K562 (cell line): ENCODE measurements at regions of chr11 and their contacts with region 1.

Region 1: GRCh38 chr11:131511794-131512193 is 141.4 kb downstream of the NTM start:
- DNase-seq: peak; percentile 30 to 42 (median 34)
- ATAC-seq: peak; percentile 90
- H3K4me3 ChIP-seq: no peak overlapping the region
- H3K27ac ChIP-seq: no peak overlapping the region
- H3K4me1 ChIP-seq: no peaks in the 10 kb centered on the region
- H3K27me3 ChIP-seq: peaks cover 0 to 8% of the 10 kb centered on the region in 2 experiments; a peak in 1 of 5 replicates
- CTCF ChIP-seq: peak; percentile 51 to 59 (median 59)
- EP300 ChIP-seq: no peak
- POLR2A ChIP-seq: no peak
- RAD21 ChIP-seq: peak; percentile 26 to 54; a peak in 3 of 4 replicates

Region 2: GRCh38 chr11:131064373-131064991 is 447.3 kb before region 1 on chr11:
- CTCF ChIA-PET with region 1: interaction called, 4 read pairs
- POLR2A ChIA-PET with region 1: no interaction called
- in situ Hi-C with region 1: loop called (anchors 5 kb)
- intact Hi-C with region 1: loop called (anchors 1 kb)
- DNase-seq: peak; percentile 64 to 66 (median 66)
- ATAC-seq: peak; percentile 98
- H3K4me3 ChIP-seq: no peak overlapping the region
- H3K27ac ChIP-seq: no peak overlapping the region
- H3K4me1 ChIP-seq: no peaks in the 10 kb centered on the region
- H3K27me3 ChIP-seq: no peaks in the 10 kb centered on the region
- CTCF ChIP-seq: peak; percentile 72 to 81 (median 75)
- EP300 ChIP-seq: no peak
- POLR2A ChIP-seq: no peak
- RAD21 ChIP-seq: peak; percentile 48 to 78

Region 3: GRCh38 chr11:131246663-131247062 is 265.1 kb before region 1 on chr11:
- CTCF ChIA-PET with region 1: no interaction called
- POLR2A ChIA-PET with region 1: no interaction called
- in situ Hi-C with region 1: no loop called
- intact Hi-C with region 1: loop called (anchors 2 kb)
- DNase-seq: peak; percentile 20 to 45 (median 30)
- ATAC-seq: peak; percentile 91
- H3K4me3 ChIP-seq: no peak overlapping the region
- H3K27ac ChIP-seq: no peak overlapping the region
- H3K4me1 ChIP-seq: no peaks in the 10 kb centered on the region
- H3K27me3 ChIP-seq: no peaks in the 10 kb centered on the region
- CTCF ChIP-seq: peak; percentile 57 to 62 (median 60)
- EP300 ChIP-seq: no peak
- POLR2A ChIP-seq: no peak
- RAD21 ChIP-seq: peak in 1 of 2 experiments; percentile 38; a peak in 2 of 4 replicates

Region 4: GRCh38 chr11:131408025-131408640 is 103.7 kb before region 1 on chr11:
- CTCF ChIA-PET with region 1: no interaction called
- POLR2A ChIA-PET with region 1: no interaction called
- in situ Hi-C with region 1: no loop called
- intact Hi-C with region 1: loop called (anchors 5 kb)
- DNase-seq: peak in 2 of 4 experiments; percentile 18 to 37
- ATAC-seq: peak; percentile 75
- H3K4me3 ChIP-seq: no peak overlapping the region
- H3K27ac ChIP-seq: no peak overlapping the region
- H3K4me1 ChIP-seq: no peaks in the 10 kb centered on the region
- H3K27me3 ChIP-seq: no peaks in the 10 kb centered on the region
- CTCF ChIP-seq: peak; percentile 42 to 54 (median 54); a peak in 5 of 6 replicates
- EP300 ChIP-seq: no peak
- POLR2A ChIP-seq: no peak
- RAD21 ChIP-seq: peak in 1 of 2 experiments; percentile 30; a peak in 2 of 4 replicates

Region 5: GRCh38 chr11:131668500-131669400 is 157.0 kb after region 1 on chr11:
- CTCF ChIA-PET with region 1: no interaction called
- POLR2A ChIA-PET with region 1: no interaction called
- in situ Hi-C with region 1: no loop called
- intact Hi-C with region 1: no loop called
- DNase-seq: peak; percentile 65 to 85 (median 76)
- ATAC-seq: peak; percentile 93
- H3K4me3 ChIP-seq: no peak overlapping the region
- H3K27ac ChIP-seq: no peak overlapping the region
- H3K4me1 ChIP-seq: no peaks in the 10 kb centered on the region
- H3K27me3 ChIP-seq: no peaks in the 10 kb centered on the region
- CTCF ChIP-seq: peak; percentile 59 to 68 (median 64)
- EP300 ChIP-seq: no peak
- POLR2A ChIP-seq: no peak
- RAD21 ChIP-seq: no peak